Transverse colon (tissue), 4 donors: ENCODE measurements at regions of chr6 and their contacts with region 1.

Region 1: GRCh38 chr6:34315780-34316179 is 67.0 kb upstream of the SMIM29 start:
- DNase-seq: no peak
- H3K4me3 ChIP-seq: no peak overlapping the region
- H3K27ac ChIP-seq: peak overlapping the region in 1 of 4 donors; percentile 30
- H3K4me1 ChIP-seq: peaks cover 8 to 41% (median 12%) of the 10 kb centered on the region in 4 donors
- H3K27me3 ChIP-seq: no peaks in the 10 kb centered on the region
- CTCF ChIP-seq: no peak
- EP300 ChIP-seq: no peak
- POLR2A ChIP-seq: no peak

Region 2: DNA sequence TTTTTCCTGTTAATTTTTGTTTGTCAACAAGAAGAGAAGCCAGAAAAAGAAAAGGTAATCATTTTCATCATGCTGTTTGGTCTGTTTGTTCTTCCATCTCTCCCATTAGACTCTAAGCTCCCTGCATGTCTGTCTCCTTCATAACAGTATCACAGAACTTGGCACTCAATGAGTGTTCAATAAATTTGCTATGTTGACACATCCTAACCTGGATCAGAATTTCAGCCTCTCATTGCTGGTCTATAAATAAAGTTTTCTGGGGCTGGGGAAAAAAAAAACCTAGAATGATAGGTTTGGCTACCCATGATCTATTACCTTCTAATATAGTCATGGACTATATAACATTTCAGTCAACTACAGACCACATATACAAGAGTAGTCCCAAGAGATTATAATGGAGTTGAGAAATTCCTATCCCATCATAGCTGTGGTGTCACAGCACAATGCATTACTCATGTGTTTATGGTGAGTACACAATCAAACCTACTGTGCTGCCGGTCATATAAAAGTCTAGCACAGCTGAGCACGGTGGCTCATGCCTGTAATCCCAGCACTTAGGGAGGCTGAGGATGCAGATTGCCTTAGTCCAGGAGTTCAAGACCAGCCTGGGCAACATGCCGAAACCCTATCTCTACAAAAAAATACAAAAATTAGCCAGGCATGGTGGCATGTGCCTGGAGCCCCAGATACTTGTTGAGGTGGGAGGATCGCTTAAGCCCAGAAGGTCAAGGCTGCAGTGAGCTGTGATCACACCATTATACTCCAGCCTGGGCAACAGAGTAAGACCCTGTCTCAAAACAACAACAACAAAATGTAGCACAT is 70.7 kb after region 1 on chr6:
- in situ Hi-C with region 1: no loop called
- intact Hi-C with region 1: loop called (anchors 10 kb)
- DNase-seq: no peak
- H3K4me3 ChIP-seq: no peak overlapping the region
- H3K27ac ChIP-seq: peak overlapping the region in 1 of 4 donors; percentile 1
- H3K4me1 ChIP-seq: peaks cover 6 to 62% (median 26%) of the 10 kb centered on the region in 4 donors
- H3K27me3 ChIP-seq: no peaks in the 10 kb centered on the region
- CTCF ChIP-seq: no peak
- EP300 ChIP-seq: no peak
- POLR2A ChIP-seq: no peak

Region 3: GRCh38 chr6:34938268-34938667 is 622.5 kb after region 1 on chr6:
- in situ Hi-C with region 1: no loop called
- intact Hi-C with region 1: no loop called
- DNase-seq: no peak
- H3K4me3 ChIP-seq: no peak overlapping the region
- H3K27ac ChIP-seq: no peak overlapping the region
- H3K4me1 ChIP-seq: peaks cover 5 to 27% (median 16%) of the 10 kb centered on the region in 4 donors
- H3K27me3 ChIP-seq: no peaks in the 10 kb centered on the region
- CTCF ChIP-seq: no peak
- EP300 ChIP-seq: no peak
- POLR2A ChIP-seq: no peak